ENCODE measurements at regions of chr10 and their contacts with region 1.

Region 1: GRCh38 chr10:7471720-7472367 is 61.0 kb upstream of the SFMBT2 start:
- DNase-seq: peak; percentile 94
- ATAC-seq: peak; percentile 93
- H3K4me3 ChIP-seq: peak overlapping the region in 4 of 5 experiments; percentile 6 to 57 (median 30)
- H3K4me3 Mint-ChIP-seq: peak overlapping the region; percentile 80
- H3K27ac ChIP-seq: peak overlapping the region; percentile 71 to 78
- H3K27ac Mint-ChIP-seq: peak overlapping the region; percentile 83
- H3K4me1 ChIP-seq: peaks cover 70% of the 10 kb centered on the region in 2 donors
- H3K4me1 Mint-ChIP-seq: peaks cover 69% of the 10 kb centered on the region
- H3K27me3 ChIP-seq: no peaks in the 10 kb centered on the region
- H3K27me3 Mint-ChIP-seq: no peaks in the 10 kb centered on the region
- CTCF ChIP-seq: no peak

Region 2: GRCh38 chr10:5977471-5978229 is 1494.2 kb before region 1 on chr10 and contains the start of gene IL15RA:
- CTCF ChIA-PET with region 1: no interaction called
- POLR2A ChIA-PET with region 1: no interaction called
- intact Hi-C with region 1: loop called (anchors 10 kb)
- DNase-seq: peak; percentile 88
- ATAC-seq: peak; percentile 77
- H3K4me3 ChIP-seq: peak within 1 kb of the TSS; percentile 74 to 96 (median 93)
- H3K4me3 Mint-ChIP-seq: peak within 1 kb of the TSS; percentile 90
- H3K27ac ChIP-seq: peak within 1 kb of the TSS; percentile 65 to 75
- H3K27ac Mint-ChIP-seq: peak within 1 kb of the TSS; percentile 95
- H3K4me1 ChIP-seq: peaks cover 8 to 27% of the 10 kb centered on the region in 2 donors
- H3K4me1 Mint-ChIP-seq: peaks cover 29% of the 10 kb centered on the region
- H3K27me3 ChIP-seq: peaks cover 0 to 3% (median 0%) of the 10 kb centered on the region in 4 experiments
- H3K27me3 Mint-ChIP-seq: no peaks in the 10 kb centered on the region
- CTCF ChIP-seq: peak; percentile 43
- total RNA-seq, gene IL15RA: 6.8 and 9.3 TPM in 2 replicates

Region 3: GRCh38 chr10:6928586-6928985 is 543.3 kb before region 1 on chr10:
- CTCF ChIA-PET with region 1: no interaction called
- POLR2A ChIA-PET with region 1: no interaction called
- intact Hi-C with region 1: loop called (anchors 1 kb)
- DNase-seq: no peak
- ATAC-seq: no peak
- H3K4me3 ChIP-seq: peak overlapping the region in 1 of 5 experiments; percentile 69
- H3K4me3 Mint-ChIP-seq: peak overlapping the region; percentile 90
- H3K27ac ChIP-seq: peak overlapping the region; percentile 44 to 68
- H3K27ac Mint-ChIP-seq: peak overlapping the region; percentile 94
- H3K4me1 ChIP-seq: peaks cover 38 to 40% of the 10 kb centered on the region in 2 donors
- H3K4me1 Mint-ChIP-seq: peaks cover 38% of the 10 kb centered on the region
- H3K27me3 ChIP-seq: no peaks in the 10 kb centered on the region
- H3K27me3 Mint-ChIP-seq: no peaks in the 10 kb centered on the region
- CTCF ChIP-seq: no peak

Region 4: GRCh38 chr10:7306147-7306546 is 165.7 kb before region 1 on chr10:
- CTCF ChIA-PET with region 1: no interaction called
- POLR2A ChIA-PET with region 1: no interaction called
- intact Hi-C with region 1: loop called (anchors 5 kb)
- DNase-seq: peak; percentile 67
- ATAC-seq: peak; percentile 87
- H3K4me3 ChIP-seq: peak overlapping the region in 4 of 5 experiments; percentile 7 to 42 (median 24)
- H3K4me3 Mint-ChIP-seq: peak overlapping the region; percentile 82
- H3K27ac ChIP-seq: peak overlapping the region; percentile 66 to 90
- H3K27ac Mint-ChIP-seq: peak overlapping the region; percentile 96
- H3K4me1 ChIP-seq: peaks cover 31 to 38% of the 10 kb centered on the region in 2 donors
- H3K4me1 Mint-ChIP-seq: peaks cover 51% of the 10 kb centered on the region
- H3K27me3 ChIP-seq: no peaks in the 10 kb centered on the region
- H3K27me3 Mint-ChIP-seq: no peaks in the 10 kb centered on the region
- CTCF ChIP-seq: no peak

Region 5: DNA sequence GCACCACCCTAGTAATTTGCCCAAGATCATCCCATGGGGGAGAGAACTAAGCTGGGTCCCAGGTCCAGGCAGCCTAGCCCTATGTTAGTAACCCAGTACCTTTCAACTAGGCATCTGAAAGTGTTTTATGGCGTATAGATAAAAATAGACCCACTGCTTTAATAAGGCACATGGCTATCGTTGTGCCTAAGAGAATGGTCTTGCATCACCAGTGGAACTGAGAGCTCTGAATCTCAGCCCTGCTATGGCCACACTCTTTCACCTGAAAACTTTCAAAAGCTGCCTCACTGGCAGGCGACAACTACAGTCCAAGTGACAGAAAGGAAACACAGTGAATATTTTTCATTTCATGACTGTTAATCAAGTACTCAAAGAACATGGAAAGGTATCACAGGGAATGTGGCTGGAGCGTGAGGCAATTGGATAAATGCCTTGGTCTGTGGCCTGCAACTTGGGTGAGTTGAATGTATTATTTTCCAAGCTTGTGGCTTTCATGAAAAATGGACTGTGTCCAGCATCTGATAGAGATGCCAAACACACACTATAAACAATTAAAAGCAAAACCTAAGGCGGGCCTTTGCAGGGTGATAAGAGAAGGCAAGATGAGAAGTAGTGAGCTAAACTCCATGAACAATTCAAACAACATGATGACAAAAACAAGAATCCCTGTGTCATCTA is 43.0 kb before region 1 on chr10:
- CTCF ChIA-PET with region 1: no interaction called
- POLR2A ChIA-PET with region 1: no interaction called
- intact Hi-C with region 1: no loop called
- DNase-seq: no peak
- ATAC-seq: no peak
- H3K4me3 ChIP-seq: no peak overlapping the region
- H3K4me3 Mint-ChIP-seq: no peak overlapping the region
- H3K27ac ChIP-seq: no peak overlapping the region
- H3K27ac Mint-ChIP-seq: no peak overlapping the region
- H3K4me1 ChIP-seq: no peaks in the 10 kb centered on the region
- H3K4me1 Mint-ChIP-seq: no peaks in the 10 kb centered on the region
- H3K27me3 ChIP-seq: no peaks in the 10 kb centered on the region
- H3K27me3 Mint-ChIP-seq: no peaks in the 10 kb centered on the region
- CTCF ChIP-seq: no peak

Region 6: GRCh38 chr10:7445474-7446185 is 26.2 kb before region 1 on chr10:
- CTCF ChIA-PET with region 1: no interaction called
- POLR2A ChIA-PET with region 1: no interaction called
- intact Hi-C with region 1: loop called (anchors 1 kb)
- DNase-seq: peak; percentile 61
- ATAC-seq: peak; percentile 74
- H3K4me3 ChIP-seq: peak overlapping the region in 1 of 5 experiments; percentile 31
- H3K4me3 Mint-ChIP-seq: peak overlapping the region; percentile 68
- H3K27ac ChIP-seq: peak overlapping the region; percentile 21 to 64
- H3K27ac Mint-ChIP-seq: peak overlapping the region; percentile 57
- H3K4me1 ChIP-seq: peaks cover 22 to 28% of the 10 kb centered on the region in 2 donors
- H3K4me1 Mint-ChIP-seq: peaks cover 26% of the 10 kb centered on the region
- H3K27me3 ChIP-seq: no peaks in the 10 kb centered on the region
- H3K27me3 Mint-ChIP-seq: no peaks in the 10 kb centered on the region
- CTCF ChIP-seq: no peak

Region 7: DNA sequence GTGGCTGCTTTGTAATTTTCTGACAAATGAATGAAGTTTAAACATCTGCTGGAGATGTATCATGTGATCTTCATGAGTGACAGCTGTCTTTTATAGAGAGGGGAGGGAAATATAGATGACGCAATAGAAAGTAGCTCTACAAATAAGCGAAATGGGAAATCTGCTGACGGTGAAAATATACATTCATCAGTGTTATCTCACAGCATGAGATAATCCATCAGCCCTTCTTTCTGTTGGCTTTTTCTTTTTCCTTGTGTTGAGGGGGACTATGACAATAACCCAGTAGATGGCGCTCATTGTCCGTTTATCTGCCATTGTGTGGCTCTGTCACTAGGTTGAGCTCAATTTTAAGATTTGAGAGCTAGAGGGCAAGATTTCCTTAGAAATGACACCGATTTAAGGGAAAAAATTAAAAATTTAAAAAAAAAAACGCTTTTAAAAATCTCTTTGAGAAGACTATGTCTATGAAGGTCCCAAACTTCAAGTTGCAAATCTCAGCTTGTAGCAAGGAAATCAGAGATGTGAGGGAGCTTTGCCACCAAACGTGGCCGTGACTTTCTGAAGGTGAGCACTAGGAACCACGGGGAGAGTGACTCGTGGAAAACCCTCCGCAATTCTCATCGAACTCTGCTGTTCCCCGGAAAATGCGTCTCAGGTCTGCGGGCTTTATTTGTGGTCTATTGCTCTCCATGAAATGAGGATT is 53.6 kb after region 1 on chr10:
- CTCF ChIA-PET with region 1: interaction called, 8 read pairs
- POLR2A ChIA-PET with region 1: no interaction called
- intact Hi-C with region 1: loop called (anchors 5 kb)
- DNase-seq: peak; percentile 75
- ATAC-seq: peak; percentile 77
- H3K4me3 ChIP-seq: no peak overlapping the region
- H3K4me3 Mint-ChIP-seq: no peak overlapping the region
- H3K27ac ChIP-seq: no peak overlapping the region
- H3K27ac Mint-ChIP-seq: no peak overlapping the region
- H3K4me1 ChIP-seq: peaks cover 5 to 8% of the 10 kb centered on the region in 2 donors
- H3K4me1 Mint-ChIP-seq: peaks cover 14% of the 10 kb centered on the region
- H3K27me3 ChIP-seq: peaks cover 0 to 1% (median 0%) of the 10 kb centered on the region in 4 experiments
- H3K27me3 Mint-ChIP-seq: peaks cover 16% of the 10 kb centered on the region
- CTCF ChIP-seq: peak; percentile 87

Region 8: DNA sequence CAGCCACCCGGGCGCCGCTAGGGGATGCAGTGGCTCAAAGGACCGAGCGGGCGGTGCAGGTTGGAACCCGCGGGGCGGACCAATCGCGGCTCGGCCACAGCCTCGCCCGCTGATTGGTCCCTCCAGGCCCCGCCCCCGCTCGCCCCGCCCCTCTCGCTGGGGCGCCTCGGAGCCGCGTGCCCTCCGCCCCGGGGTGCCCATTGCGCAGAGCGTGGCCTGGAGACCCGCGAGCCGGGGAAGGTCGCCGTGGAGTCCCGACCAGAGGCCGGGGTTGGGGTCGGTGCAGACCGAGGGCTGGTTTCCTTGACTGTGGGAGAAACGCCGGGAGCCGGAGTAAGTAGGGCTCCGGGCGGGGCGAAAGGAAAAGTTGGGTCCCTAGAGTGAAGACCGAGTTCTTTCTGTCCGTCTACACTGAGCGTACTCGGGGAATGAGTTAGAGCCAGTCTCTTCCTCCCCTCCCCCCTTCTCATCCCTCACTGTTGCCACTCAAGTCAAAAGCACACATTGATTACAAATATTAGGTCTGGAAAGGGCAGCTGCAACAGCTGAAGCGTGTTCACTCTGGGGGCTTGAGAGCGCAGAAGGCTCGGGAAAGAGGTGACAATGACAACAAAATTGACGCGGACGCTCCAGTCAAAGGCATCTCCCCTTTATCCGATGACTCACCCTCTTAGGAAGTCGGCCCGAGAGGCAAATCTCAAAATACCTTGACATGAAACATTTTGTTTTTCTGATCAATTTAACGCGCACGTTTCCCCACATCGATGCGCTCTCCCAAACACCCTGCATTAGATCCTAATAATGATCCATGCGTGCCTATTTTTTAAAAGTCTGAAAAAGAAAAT is 581.8 kb after region 1 on chr10:
- CTCF ChIA-PET with region 1: no interaction called
- POLR2A ChIA-PET with region 1: no interaction called
- intact Hi-C with region 1: loop called (anchors 10 kb)
- DNase-seq: peak; percentile 59
- ATAC-seq: peak; percentile 76
- H3K4me3 ChIP-seq: peak overlapping the region in 3 of 5 experiments; percentile 25 to 52 (median 40)
- H3K4me3 Mint-ChIP-seq: peak overlapping the region; percentile 84
- H3K27ac ChIP-seq: no peak overlapping the region
- H3K27ac Mint-ChIP-seq: peak overlapping the region; percentile 66
- H3K4me1 ChIP-seq: peaks cover 77 to 83% of the 10 kb centered on the region in 2 donors
- H3K4me1 Mint-ChIP-seq: peaks cover 42% of the 10 kb centered on the region
- H3K27me3 ChIP-seq: peaks cover 0 to 93% (median 47%) of the 10 kb centered on the region in 4 experiments
- H3K27me3 Mint-ChIP-seq: peaks cover 38% of the 10 kb centered on the region
- CTCF ChIP-seq: no peak

Measured in B cell (primary cell).